Activated naive CD4-positive, alpha-beta T cell treated with anti-CD3 and anti-CD28 coated beads for 36 hours (primary cell): ENCODE measurements at regions of chr6 and their contacts with region 1.

Region 1: GRCh38 chr6:82270881-82271645 is 23.5 kb upstream of the IBTK start:
- DNase-seq: no peak
- H3K4me3 Mint-ChIP-seq: no peak overlapping the region
- H3K27ac Mint-ChIP-seq: no peak overlapping the region
- H3K4me1 Mint-ChIP-seq: no peaks in the 10 kb centered on the region
- H3K27me3 Mint-ChIP-seq: no peaks in the 10 kb centered on the region

Region 2: GRCh38 chr6:82363351-82364086 is 92.5 kb after region 1 on chr6 and contains the start of gene TPBG:
- CTCF ChIA-PET with region 1: interaction called, 3 read pairs
- intact Hi-C with region 1: loop called (anchors 5 kb)
- DNase-seq: peak; percentile 39
- H3K4me3 Mint-ChIP-seq: peak within 1 kb of the TSS; percentile 69
- H3K27ac Mint-ChIP-seq: no peak within 1 kb of the TSS
- H3K4me1 Mint-ChIP-seq: peaks cover 19% of the 10 kb centered on the region
- H3K27me3 Mint-ChIP-seq: peaks cover 50% of the 10 kb centered on the region
- total RNA-seq, gene TPBG: 0.07 TPM in 1 of 2 experiments, not detected in the other

Region 3: DNA sequence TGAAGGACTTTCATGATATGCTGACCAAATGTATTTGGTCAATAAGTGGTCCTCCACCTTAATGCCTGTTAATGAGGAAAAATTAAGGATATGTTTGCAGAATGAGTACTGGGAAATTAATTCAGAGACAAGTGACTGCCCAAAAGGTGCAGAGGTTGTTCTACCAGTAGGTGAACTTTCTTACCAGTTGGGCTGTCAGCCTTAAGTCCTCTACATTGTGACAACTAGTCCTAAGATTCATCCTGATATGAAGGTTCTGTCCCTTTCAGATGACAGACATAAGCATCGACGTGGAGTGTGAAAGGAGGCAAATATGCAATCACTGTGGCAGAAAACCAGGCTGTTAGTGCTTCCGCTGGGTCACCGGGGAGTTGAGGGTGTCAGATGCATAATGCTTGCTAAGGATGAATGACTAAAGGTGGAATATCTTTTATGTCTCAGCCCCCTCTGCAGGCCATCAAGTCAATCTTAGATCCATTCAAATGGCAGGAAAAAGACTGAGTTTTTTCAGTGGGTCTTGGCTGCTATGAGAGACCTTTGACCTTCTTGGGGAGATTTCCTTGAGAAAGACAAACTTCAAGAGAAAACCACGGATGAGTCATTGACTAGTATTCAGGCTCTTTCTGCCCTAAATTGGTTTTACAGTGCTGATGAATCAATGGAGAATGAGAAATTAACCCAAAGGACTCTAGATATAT is 318.6 kb after region 1 on chr6:
- CTCF ChIA-PET with region 1: no interaction called
- intact Hi-C with region 1: loop called (anchors 1 kb)
- DNase-seq: no peak
- H3K4me3 Mint-ChIP-seq: no peak overlapping the region
- H3K27ac Mint-ChIP-seq: no peak overlapping the region
- H3K4me1 Mint-ChIP-seq: no peaks in the 10 kb centered on the region
- H3K27me3 Mint-ChIP-seq: no peaks in the 10 kb centered on the region

Region 4: DNA sequence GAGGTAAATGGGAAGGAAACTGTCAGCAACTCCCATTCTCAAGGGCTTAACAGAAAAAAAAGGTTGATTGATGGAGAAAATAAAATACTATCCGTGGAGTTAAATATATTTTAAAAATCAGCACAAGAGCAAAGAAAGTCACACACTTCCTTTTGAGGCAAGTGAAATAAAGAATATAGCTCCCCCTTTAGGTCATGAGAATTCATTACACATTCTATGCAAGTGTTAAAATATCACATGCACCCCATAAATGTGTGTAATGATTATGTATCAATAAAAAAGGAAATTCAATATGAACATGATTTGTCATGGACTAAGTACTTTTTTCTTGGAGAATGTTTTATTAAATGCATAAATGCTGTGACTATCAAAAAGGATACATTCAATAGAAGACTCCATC is 441.8 kb after region 1 on chr6:
- CTCF ChIA-PET with region 1: interaction called, 4 read pairs
- intact Hi-C with region 1: loop called (anchors 1 kb)
- DNase-seq: no peak
- H3K4me3 Mint-ChIP-seq: no peak overlapping the region
- H3K27ac Mint-ChIP-seq: no peak overlapping the region
- H3K4me1 Mint-ChIP-seq: no peaks in the 10 kb centered on the region
- H3K27me3 Mint-ChIP-seq: peaks cover 2% of the 10 kb centered on the region

Region 5: GRCh38 chr6:83057705-83058321 is 786.8 kb after region 1 on chr6:
- CTCF ChIA-PET with region 1: interaction called, 20 read pairs
- intact Hi-C with region 1: loop called (anchors 1 kb)
- DNase-seq: peak; percentile 45
- H3K4me3 Mint-ChIP-seq: no peak overlapping the region
- H3K27ac Mint-ChIP-seq: no peak overlapping the region
- H3K4me1 Mint-ChIP-seq: peaks cover 9% of the 10 kb centered on the region
- H3K27me3 Mint-ChIP-seq: no peaks in the 10 kb centered on the region

Region 6: GRCh38 chr6:83215131-83216047 is 944.3 kb after region 1 on chr6:
- CTCF ChIA-PET with region 1: interaction called, 3 read pairs
- intact Hi-C with region 1: loop called (anchors 1 kb)
- DNase-seq: peak; percentile 80
- H3K4me3 Mint-ChIP-seq: no peak overlapping the region
- H3K27ac Mint-ChIP-seq: no peak overlapping the region
- H3K4me1 Mint-ChIP-seq: no peaks in the 10 kb centered on the region
- H3K27me3 Mint-ChIP-seq: no peaks in the 10 kb centered on the region

Region 7: DNA sequence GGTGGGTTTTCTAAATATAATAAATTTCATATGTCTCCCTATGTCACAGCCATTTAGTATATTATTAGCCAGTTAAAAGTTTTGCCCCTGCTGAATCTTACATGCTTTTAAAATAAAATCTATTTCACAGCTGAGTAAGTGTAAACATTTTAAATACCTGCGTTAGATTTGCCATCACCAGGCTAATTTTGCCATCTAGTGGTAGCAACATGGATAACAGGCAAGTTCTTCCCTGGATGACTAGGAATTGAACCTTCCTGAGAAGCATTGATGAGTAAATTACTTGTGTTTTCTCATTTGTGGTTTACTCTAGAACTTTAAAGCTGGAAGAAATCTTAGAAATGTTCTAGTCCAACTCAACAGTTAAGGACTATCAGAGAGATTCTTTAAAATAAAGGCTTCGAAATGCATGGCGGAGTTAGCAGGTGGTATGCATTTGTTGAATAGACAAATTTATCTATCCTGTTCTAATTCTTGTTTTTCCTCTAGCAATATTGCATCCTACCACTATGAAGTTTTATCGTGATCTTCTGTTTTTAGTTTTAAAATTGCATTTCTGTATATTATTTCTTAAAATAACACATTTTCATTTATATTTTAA is 1243.9 kb after region 1 on chr6:
- CTCF ChIA-PET with region 1: no interaction called
- intact Hi-C with region 1: loop called (anchors 2 kb)
- DNase-seq: peak; percentile 45
- H3K4me3 Mint-ChIP-seq: no peak overlapping the region
- H3K27ac Mint-ChIP-seq: no peak overlapping the region
- H3K4me1 Mint-ChIP-seq: peaks cover 7% of the 10 kb centered on the region
- H3K27me3 Mint-ChIP-seq: peaks cover 39% of the 10 kb centered on the region